CD14-positive monocyte (primary cell): ENCODE measurements at regions of chr2 and their contacts with region 1.

Region 1: GRCh38 chr2:70919672-70920366 is 15.9 kb upstream of the ATP6V1B1 start:
- DNase-seq: peak; percentile 54 to 71 (median 68)
- H3K4me3 ChIP-seq: no peak overlapping the region
- H3K4me3 Mint-ChIP-seq: no peak overlapping the region
- H3K27ac ChIP-seq: no peak overlapping the region
- H3K27ac Mint-ChIP-seq: no peak overlapping the region
- H3K4me1 ChIP-seq: no peaks in the 10 kb centered on the region
- H3K4me1 Mint-ChIP-seq: no peaks in the 10 kb centered on the region
- H3K27me3 ChIP-seq: peaks cover 4 to 21% of the 10 kb centered on the region in 2 donors
- H3K27me3 Mint-ChIP-seq: peaks cover 29 to 41% (median 30%) of the 10 kb centered on the region in 3 donors
- CTCF ChIP-seq: peak; percentile 93

Region 2: DNA sequence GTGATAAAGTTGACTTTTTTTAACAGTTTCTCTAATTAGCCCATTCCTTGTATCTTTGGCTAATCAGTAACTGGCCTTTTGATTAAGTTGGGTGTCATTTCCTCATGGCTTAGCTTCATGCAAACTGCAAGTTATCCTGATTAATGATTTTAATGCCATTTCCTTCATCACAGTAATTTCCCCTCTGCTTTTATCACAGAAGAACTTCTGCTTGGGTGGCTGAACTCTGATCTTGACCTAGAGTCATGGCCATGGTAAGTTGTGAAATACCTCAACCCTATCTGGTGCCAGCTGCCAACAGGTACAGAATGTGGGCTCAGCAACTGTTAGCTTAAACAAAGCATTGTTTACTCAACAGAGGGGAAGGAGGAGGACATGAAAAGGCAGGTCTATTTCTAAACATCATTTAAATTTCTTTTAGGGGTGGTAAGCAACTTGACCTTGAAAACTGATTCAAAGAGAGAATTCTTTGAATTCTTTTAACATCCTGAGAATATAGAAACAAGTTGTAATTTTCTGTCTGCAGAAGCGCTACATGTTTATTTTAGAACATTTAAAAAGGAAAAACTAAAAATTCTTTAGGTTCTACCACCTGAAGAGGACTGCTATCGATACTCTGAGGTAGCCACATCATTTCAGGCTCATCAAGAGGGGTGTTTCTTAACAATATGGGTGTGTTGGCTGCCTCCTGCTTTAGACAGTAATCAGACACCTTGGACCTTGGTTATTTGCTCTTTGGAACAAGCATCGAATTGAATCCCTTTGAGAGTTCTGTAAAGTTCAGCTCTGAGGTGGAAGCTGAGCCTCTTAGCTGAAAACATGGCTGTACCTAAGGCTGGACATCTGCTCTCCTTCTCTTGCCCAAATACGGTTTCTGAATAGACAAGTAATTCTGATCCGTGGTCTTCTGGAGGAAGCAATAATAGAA is 1138.2 kb before region 1 on chr2:
- intact Hi-C with region 1: no loop called
- DNase-seq: no peak
- H3K4me3 ChIP-seq: no peak overlapping the region
- H3K4me3 Mint-ChIP-seq: no peak overlapping the region
- H3K27ac ChIP-seq: no peak overlapping the region
- H3K27ac Mint-ChIP-seq: peak overlapping the region in 1 of 7 donors; percentile 6
- H3K4me1 ChIP-seq: peaks cover 5 to 6% of the 10 kb centered on the region in 2 donors
- H3K4me1 Mint-ChIP-seq: peaks cover 25% of the 10 kb centered on the region
- H3K27me3 ChIP-seq: no peaks in the 10 kb centered on the region
- H3K27me3 Mint-ChIP-seq: peaks cover 0 to 2% (median 2%) of the 10 kb centered on the region in 3 donors
- CTCF ChIP-seq: no peak

Region 3: GRCh38 chr2:70861777-70862625 is 57.8 kb before region 1 on chr2:
- intact Hi-C with region 1: loop called in 1 of 2 experiments (anchors 5 kb)
- DNase-seq: peak; percentile 56 to 71 (median 68)
- H3K4me3 ChIP-seq: no peak overlapping the region
- H3K4me3 Mint-ChIP-seq: peak overlapping the region in 1 of 2 donors; percentile 66
- H3K27ac ChIP-seq: no peak overlapping the region
- H3K27ac Mint-ChIP-seq: peak overlapping the region in 1 of 7 donors; percentile 24
- H3K4me1 ChIP-seq: peaks cover 0 to 4% of the 10 kb centered on the region in 2 donors
- H3K4me1 Mint-ChIP-seq: peaks cover 4% of the 10 kb centered on the region
- H3K27me3 ChIP-seq: peaks cover 19 to 46% of the 10 kb centered on the region in 2 donors
- H3K27me3 Mint-ChIP-seq: peaks cover 61 to 70% (median 64%) of the 10 kb centered on the region in 3 donors
- CTCF ChIP-seq: peak; percentile 93

Region 4: DNA sequence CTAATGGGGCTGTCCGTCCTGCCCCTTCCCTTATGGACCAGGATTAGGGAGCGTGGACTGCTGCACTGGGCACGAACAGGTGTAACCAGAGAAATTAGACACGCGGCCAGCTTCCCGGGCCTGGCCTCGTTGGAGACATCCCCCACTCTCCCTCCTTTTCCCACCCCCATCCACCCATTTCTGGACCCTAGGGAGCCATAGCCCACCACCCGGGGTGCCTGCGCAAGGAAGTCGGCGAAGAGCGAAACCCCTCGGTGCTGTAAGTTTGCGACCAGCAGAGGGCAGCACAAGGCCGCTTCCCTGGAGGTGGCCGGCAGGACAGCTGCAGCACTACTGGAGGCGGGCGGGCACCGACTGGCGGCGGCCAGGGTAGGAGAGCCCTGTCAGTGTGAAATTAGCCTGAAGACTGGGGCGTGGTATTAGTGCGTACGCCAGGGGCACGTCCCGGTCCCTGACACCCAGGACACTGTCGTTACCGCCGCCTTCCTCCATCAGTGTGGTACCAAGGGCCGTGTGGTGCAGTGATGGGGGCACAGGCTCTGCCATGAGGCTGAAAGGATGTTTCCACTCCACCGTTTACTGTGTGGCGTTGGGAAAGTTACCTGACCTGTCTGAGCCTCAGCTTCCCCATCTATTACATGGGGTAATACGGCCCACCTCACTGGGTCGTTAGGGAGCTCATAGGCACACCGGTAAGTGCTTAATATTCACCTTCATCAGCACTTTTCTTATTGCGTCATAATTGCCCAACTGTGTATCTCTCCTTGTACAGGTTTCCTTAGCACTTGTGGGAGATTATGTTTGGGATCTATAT is 48.2 kb before region 1 on chr2:
- intact Hi-C with region 1: loop called in 1 of 2 experiments (anchors 5 kb)
- DNase-seq: peak; percentile 80 to 82 (median 81)
- H3K4me3 ChIP-seq: peak overlapping the region in 1 of 3 experiments; percentile 41
- H3K4me3 Mint-ChIP-seq: peak overlapping the region in 1 of 2 donors; percentile 74
- H3K27ac ChIP-seq: no peak overlapping the region
- H3K27ac Mint-ChIP-seq: no peak overlapping the region
- H3K4me1 ChIP-seq: peaks cover 0 to 9% of the 10 kb centered on the region in 2 donors
- H3K4me1 Mint-ChIP-seq: peaks cover 4% of the 10 kb centered on the region
- H3K27me3 ChIP-seq: peaks cover 12 to 54% of the 10 kb centered on the region in 2 donors
- H3K27me3 Mint-ChIP-seq: peaks cover 41 to 67% (median 66%) of the 10 kb centered on the region in 3 donors
- CTCF ChIP-seq: peak; percentile 90

Region 5: GRCh38 chr2:70960369-70960811 is 40.6 kb after region 1 on chr2:
- intact Hi-C with region 1: no loop called
- DNase-seq: peak in 1 of 3 donors; percentile 5
- H3K4me3 ChIP-seq: no peak overlapping the region
- H3K4me3 Mint-ChIP-seq: no peak overlapping the region
- H3K27ac ChIP-seq: no peak overlapping the region
- H3K27ac Mint-ChIP-seq: no peak overlapping the region
- H3K4me1 ChIP-seq: peaks cover 8% of the 10 kb centered on the region in 2 donors
- H3K4me1 Mint-ChIP-seq: peaks cover 11% of the 10 kb centered on the region
- H3K27me3 ChIP-seq: peaks cover 4 to 19% of the 10 kb centered on the region in 2 donors
- H3K27me3 Mint-ChIP-seq: peaks cover 27 to 39% (median 39%) of the 10 kb centered on the region in 3 donors
- CTCF ChIP-seq: peak; percentile 19

Region 6: GRCh38 chr2:71306762-71307161 is 386.9 kb after region 1 on chr2:
- intact Hi-C with region 1: no loop called
- DNase-seq: no peak
- H3K4me3 ChIP-seq: no peak overlapping the region
- H3K4me3 Mint-ChIP-seq: no peak overlapping the region
- H3K27ac ChIP-seq: no peak overlapping the region
- H3K27ac Mint-ChIP-seq: no peak overlapping the region
- H3K4me1 ChIP-seq: no peaks in the 10 kb centered on the region
- H3K4me1 Mint-ChIP-seq: no peaks in the 10 kb centered on the region
- H3K27me3 ChIP-seq: no peaks in the 10 kb centered on the region
- H3K27me3 Mint-ChIP-seq: peaks cover 0 to 2% (median 1%) of the 10 kb centered on the region in 3 donors
- CTCF ChIP-seq: no peak